ENCODE measurements at regions of chr11 and their contacts with region 1.

Region 1: GRCh38 chr11:119262668-119263351 is 54.1 kb downstream of the MCAM start:
- DNase-seq: no peak
- H3K4me3 ChIP-seq: peak overlapping the region; percentile 17
- H3K4me3 Mint-ChIP-seq: no peak overlapping the region
- H3K27ac ChIP-seq: no peak overlapping the region
- H3K27ac Mint-ChIP-seq: no peak overlapping the region
- H3K4me1 ChIP-seq: peaks cover 84% of the 10 kb centered on the region
- H3K4me1 Mint-ChIP-seq: peaks cover 50 to 52% (median 51%) of the 10 kb centered on the region in 3 donors
- H3K27me3 ChIP-seq: no peaks in the 10 kb centered on the region
- H3K27me3 Mint-ChIP-seq: no peaks in the 10 kb centered on the region

Region 2: DNA sequence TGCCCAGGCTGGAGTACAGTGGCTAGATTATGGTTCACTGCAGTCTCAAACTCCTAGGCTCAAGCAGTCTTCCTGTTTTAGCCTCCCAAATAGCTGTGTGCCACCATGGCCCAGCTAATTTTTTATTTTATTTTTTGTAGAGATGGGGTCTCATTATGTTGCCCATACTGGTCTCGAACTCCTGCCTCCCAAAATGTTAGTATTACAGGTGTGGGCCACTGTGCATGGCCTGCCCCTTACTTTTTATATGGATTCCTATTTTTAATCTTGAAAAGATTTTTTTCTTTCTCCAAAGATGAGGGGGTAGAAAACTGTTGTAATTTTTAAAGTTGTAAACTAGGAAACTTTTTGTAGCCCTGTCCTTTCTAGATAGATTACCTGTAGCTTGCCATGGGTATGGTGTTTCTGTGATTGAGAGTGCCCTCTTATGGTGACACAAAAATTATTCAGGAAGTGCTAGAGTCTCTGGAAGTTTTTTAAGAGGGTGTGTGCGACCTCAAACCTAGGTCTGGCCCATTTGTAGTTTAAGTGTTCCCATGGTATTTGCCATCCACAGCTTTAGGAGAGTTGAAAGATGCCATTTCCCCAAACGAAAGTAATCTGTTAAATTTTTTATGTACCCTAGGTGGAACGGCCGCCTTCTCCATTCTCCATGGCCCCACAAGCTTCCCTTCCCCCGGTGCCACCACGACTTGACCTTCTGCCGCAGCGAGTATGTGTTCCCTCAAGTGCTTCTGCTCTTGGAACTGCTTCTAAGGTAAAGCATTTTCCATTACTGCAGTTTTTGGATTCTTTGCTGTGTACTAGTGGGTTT is 21.7 kb after region 1 on chr11:
- CTCF ChIA-PET with region 1: interaction called, 26 read pairs
- POLR2A ChIA-PET with region 1: interaction called, 6 read pairs
- DNase-seq: peak in 2 of 5 donors; percentile 49 to 62
- H3K4me3 ChIP-seq: no peak overlapping the region
- H3K4me3 Mint-ChIP-seq: no peak overlapping the region
- H3K27ac ChIP-seq: no peak overlapping the region
- H3K27ac Mint-ChIP-seq: peak overlapping the region in 7 of 8 donors; percentile 5 to 66 (median 31)
- H3K4me1 ChIP-seq: peaks cover 14% of the 10 kb centered on the region
- H3K4me1 Mint-ChIP-seq: peaks cover 18 to 26% (median 25%) of the 10 kb centered on the region in 3 donors
- H3K27me3 ChIP-seq: no peaks in the 10 kb centered on the region
- H3K27me3 Mint-ChIP-seq: no peaks in the 10 kb centered on the region

Region 3: DNA sequence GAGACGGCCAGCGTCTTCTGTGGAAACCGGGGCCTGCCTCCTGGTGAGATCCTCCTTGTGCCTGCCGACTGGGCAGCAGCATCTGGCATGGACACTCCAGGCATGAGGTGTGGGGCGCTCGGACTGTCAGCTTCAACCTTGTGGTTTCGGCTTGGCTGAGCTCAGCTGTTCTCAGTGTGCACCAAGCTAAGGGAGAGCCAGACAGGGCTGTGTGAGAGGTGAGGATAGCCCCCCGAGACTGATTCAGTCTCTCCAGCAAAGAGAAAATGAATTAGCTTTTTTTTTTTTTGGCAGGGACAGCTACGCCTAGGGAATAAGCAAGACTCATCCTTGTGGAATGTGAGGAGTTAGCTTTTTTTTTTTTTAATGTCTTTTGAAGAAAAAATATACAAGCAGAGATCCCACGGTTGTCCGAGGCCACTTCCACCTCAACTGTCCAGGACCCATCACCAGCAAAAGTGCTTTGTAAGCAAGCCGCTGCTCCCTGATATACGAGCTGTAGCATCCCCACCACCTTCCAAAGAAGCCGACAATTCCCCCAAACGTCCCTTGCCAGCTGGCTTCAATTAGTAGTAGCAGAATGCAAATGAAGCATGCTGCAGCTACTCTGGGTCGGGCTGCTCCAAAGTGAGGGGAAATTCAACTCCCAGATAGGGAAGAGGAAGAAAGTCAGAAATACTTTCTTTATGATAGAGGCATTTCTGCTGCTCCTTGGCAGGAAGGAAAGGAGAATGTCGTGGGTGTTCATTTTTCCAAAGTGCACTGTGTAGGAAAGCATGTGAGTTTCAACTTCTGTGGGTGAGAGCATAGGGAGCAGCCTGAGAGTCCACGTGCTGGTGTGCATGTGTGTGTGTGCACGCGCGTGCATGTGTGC is 169.9 kb after region 1 on chr11:
- CTCF ChIA-PET with region 1: no interaction called
- POLR2A ChIA-PET with region 1: no interaction called
- DNase-seq: no peak
- H3K4me3 ChIP-seq: no peak overlapping the region
- H3K4me3 Mint-ChIP-seq: no peak overlapping the region
- H3K27ac ChIP-seq: no peak overlapping the region
- H3K27ac Mint-ChIP-seq: peak overlapping the region in 1 of 8 donors; percentile 77
- H3K4me1 ChIP-seq: no peaks in the 10 kb centered on the region
- H3K4me1 Mint-ChIP-seq: no peaks in the 10 kb centered on the region
- H3K27me3 ChIP-seq: no peaks in the 10 kb centered on the region
- H3K27me3 Mint-ChIP-seq: peaks cover 15 to 54% of the 10 kb centered on the region in 2 donors

Region 4: DNA sequence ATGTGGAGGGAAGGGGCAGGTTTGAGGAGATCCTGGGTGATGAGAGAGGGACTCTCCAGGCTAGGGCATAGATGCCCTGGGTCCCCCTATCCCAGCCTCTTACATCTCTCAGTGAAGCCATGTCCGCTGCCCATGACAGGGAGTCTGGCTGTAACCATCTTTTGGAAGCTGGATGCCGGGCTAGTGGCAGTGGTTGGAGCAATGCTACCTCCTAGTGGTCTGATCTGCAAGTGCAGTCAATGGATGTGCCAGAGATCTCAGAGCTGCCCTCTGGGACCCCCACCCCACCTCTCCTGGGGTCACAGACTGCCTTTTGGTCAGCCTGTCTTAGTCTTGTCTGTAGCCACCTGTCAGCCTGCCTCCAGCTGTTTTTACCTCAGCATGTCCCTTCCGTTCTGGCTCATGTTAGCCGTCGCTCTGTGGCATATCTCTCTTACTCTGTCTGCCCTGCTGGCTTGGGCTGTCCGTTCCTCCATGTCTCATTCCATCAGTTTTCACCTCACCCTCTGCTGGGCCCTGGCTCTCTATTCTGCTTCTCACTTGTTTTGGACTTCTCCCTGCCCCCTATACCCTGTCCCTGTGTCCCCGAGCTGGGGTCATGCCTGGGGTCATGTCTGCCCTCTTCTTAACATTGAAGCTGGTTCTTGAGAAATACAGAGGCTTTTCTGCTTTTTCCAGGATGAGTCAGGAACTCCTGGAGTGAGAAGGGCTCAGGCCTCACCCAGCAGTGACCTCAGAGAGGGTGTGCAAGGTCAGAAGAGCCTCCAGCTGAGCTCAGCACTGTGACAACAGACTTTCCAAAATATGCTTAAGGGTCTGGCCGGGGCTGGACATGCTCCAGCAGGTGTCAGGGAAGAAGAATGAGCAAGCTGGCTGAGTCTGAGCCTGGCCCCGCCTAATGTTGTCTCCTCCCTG is 212.1 kb after region 1 on chr11:
- CTCF ChIA-PET with region 1: no interaction called
- POLR2A ChIA-PET with region 1: no interaction called
- DNase-seq: peak; percentile 27 to 58 (median 35)
- H3K4me3 ChIP-seq: no peak overlapping the region
- H3K4me3 Mint-ChIP-seq: no peak overlapping the region
- H3K27ac ChIP-seq: no peak overlapping the region
- H3K27ac Mint-ChIP-seq: no peak overlapping the region
- H3K4me1 ChIP-seq: no peaks in the 10 kb centered on the region
- H3K4me1 Mint-ChIP-seq: no peaks in the 10 kb centered on the region
- H3K27me3 ChIP-seq: peaks cover 5% of the 10 kb centered on the region
- H3K27me3 Mint-ChIP-seq: peaks cover 11 to 55% of the 10 kb centered on the region in 2 donors

Measured in CD8-positive, alpha-beta memory T cell (primary cell).